Left colon (tissue), 2 donors: ENCODE measurements at regions of chr15 and their contacts with region 1.

Region 1: DNA sequence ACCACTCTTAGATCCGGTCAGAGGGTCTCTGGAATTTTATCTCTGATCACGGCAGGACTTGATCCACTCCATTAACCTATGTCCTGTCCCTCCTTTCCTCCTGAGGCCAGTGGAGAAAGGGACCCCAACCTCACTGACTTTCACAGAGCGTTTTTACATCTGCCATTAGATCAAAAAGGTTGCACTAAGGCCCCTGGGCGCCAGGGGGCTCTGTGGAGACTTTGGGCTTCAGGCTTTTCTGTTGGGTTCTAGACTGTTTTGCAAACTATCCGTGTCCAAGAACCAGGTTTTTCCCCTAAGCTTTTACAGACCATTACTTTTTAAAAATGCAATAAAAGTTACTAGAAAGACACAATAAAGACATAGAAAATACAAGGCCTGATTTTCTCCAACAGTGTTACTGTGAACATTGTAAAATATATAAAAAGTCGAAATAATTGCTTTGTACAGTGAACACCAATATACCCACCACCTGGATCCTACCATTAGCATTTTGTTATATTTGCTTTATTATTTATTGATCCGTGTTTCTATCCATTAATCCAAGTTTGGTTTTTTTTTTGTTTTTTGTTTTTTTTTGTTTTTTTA is 159.7 kb downstream of the POLR2M start:
- DNase-seq: peak; percentile 33 to 75
- ATAC-seq: peak; percentile 66

Region 2: GRCh38 chr15:57559875-57560274 is 306.4 kb before region 1 on chr15:
- intact Hi-C with region 1: loop called in 1 of 2 experiments (anchors 10 kb)
- DNase-seq: peak; percentile 86 to 89
- ATAC-seq: peak; percentile 96

Region 3: DNA sequence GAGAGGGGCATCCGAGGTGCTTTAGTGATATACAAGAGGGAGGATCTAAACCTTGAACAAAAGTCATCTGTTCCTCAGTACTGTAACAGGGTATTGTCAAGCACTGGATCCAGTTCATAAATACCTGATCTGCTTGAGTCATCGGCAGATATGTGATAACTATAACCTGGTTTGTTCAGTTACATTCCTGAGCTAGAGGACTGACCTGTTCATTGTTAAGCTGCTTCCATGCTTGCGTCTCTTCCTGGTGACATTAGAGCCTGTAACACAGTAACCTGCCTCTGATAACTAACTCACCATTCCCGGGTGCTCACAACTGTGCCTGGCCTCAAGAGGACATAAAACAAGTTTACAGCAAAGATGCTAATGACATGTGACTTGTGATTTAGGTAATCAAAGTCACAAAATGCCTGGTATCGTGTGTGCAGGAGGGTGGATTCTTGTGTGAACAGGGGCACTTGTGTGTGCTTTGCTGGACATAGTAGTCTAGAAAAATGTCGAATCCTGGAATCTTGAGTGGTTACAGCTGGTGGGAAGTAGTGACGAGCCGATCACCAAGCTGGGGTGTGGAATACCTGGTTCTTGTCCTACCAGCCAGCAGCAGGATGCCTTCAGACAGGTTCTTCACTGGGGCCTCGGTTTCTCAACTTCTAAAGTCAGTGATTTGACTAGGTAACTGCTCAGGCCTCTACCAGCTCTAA is 190.6 kb before region 1 on chr15:
- intact Hi-C with region 1: loop called in 1 of 2 experiments (anchors 10 kb)
- DNase-seq: no peak
- ATAC-seq: no peak

Region 4: GRCh38 chr15:58064980-58065444 is 198.8 kb after region 1 on chr15:
- intact Hi-C with region 1: loop called in 1 of 2 experiments (anchors 5 kb)
- DNase-seq: peak in 1 of 2 donors; percentile 17
- ATAC-seq: no peak